ENCODE measurements at regions of chr1 and their contacts with region 1.

Region 1: GRCh38 chr1:245942856-245943255 is 564.2 kb downstream of the SMYD3 start:
- DNase-seq: peak in 2 of 5 donors; percentile 39 to 74
- H3K4me3 ChIP-seq: no peak overlapping the region
- H3K4me3 Mint-ChIP-seq: peak overlapping the region in 4 of 7 donors; percentile 2 to 43 (median 16)
- H3K27ac ChIP-seq: no peak overlapping the region
- H3K27ac Mint-ChIP-seq: peak overlapping the region in 4 of 8 donors; percentile 2 to 25 (median 13)
- H3K4me1 ChIP-seq: peaks cover 10% of the 10 kb centered on the region
- H3K4me1 Mint-ChIP-seq: peaks cover 17 to 28% (median 28%) of the 10 kb centered on the region in 3 donors
- H3K27me3 ChIP-seq: no peaks in the 10 kb centered on the region
- H3K27me3 Mint-ChIP-seq: no peaks in the 10 kb centered on the region

Region 2: GRCh38 chr1:245698860-245699259 is 244.0 kb before region 1 on chr1:
- CTCF ChIA-PET with region 1: no interaction called
- POLR2A ChIA-PET with region 1: no interaction called
- DNase-seq: no peak
- H3K4me3 ChIP-seq: no peak overlapping the region
- H3K4me3 Mint-ChIP-seq: no peak overlapping the region
- H3K27ac ChIP-seq: no peak overlapping the region
- H3K27ac Mint-ChIP-seq: no peak overlapping the region
- H3K4me1 ChIP-seq: no peaks in the 10 kb centered on the region
- H3K4me1 Mint-ChIP-seq: no peaks in the 10 kb centered on the region
- H3K27me3 ChIP-seq: no peaks in the 10 kb centered on the region
- H3K27me3 Mint-ChIP-seq: peaks cover 0 to 1% of the 10 kb centered on the region in 2 donors

Region 3: DNA sequence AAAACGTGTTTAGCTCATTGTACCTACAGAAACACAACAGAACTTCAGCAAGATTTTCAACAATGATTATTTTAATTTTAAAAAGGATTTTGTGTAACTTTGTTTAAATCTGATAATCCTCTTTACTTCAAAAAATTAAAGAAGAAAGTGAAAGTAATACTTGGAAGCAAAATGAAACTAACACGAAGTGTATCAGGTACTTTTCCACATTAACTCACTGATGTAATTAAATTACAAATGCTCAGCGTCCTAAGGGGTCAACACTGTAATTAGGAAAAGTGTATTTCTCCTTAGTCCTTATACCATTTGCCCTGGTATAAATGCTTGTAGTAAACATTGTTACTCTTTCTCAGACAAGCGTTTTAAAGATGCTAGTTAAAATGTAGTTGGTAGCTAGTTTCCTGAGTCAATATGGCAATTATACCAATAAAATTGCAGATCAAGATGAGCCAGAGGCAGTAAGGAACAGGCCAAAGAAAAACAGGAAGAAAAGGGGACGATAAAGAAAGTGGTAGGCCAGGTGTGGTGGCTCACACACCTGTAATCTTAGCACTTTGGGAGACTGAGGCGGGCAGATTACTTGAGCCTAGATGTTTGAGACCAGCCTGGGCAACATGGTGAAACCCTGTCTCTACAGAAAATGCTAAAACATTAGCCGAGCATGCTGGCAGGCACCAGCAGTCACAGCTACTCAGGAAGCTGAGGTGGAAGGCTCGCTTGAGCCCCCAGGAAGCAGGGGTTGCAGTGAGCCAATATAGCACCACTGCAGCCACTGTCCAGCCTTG is 11.2 kb after region 1 on chr1:
- CTCF ChIA-PET with region 1: interaction called, 3 read pairs
- POLR2A ChIA-PET with region 1: interaction called, 10 read pairs
- DNase-seq: peak in 2 of 5 donors; percentile 31 to 40
- H3K4me3 ChIP-seq: peak overlapping the region; percentile 54
- H3K4me3 Mint-ChIP-seq: peak overlapping the region; percentile 73 to 92 (median 77)
- H3K27ac ChIP-seq: peak overlapping the region; percentile 76
- H3K27ac Mint-ChIP-seq: peak overlapping the region in 4 of 8 donors; percentile 95 to 98 (median 97)
- H3K4me1 ChIP-seq: peaks cover 50% of the 10 kb centered on the region
- H3K4me1 Mint-ChIP-seq: peaks cover 20 to 29% (median 28%) of the 10 kb centered on the region in 3 donors
- H3K27me3 ChIP-seq: no peaks in the 10 kb centered on the region
- H3K27me3 Mint-ChIP-seq: no peaks in the 10 kb centered on the region

Region 4: GRCh38 chr1:246095443-246095842 is 152.6 kb after region 1 on chr1:
- CTCF ChIA-PET with region 1: no interaction called
- POLR2A ChIA-PET with region 1: no interaction called
- DNase-seq: no peak
- H3K4me3 ChIP-seq: no peak overlapping the region
- H3K4me3 Mint-ChIP-seq: no peak overlapping the region
- H3K27ac ChIP-seq: no peak overlapping the region
- H3K27ac Mint-ChIP-seq: no peak overlapping the region
- H3K4me1 ChIP-seq: no peaks in the 10 kb centered on the region
- H3K4me1 Mint-ChIP-seq: no peaks in the 10 kb centered on the region
- H3K27me3 ChIP-seq: no peaks in the 10 kb centered on the region
- H3K27me3 Mint-ChIP-seq: no peaks in the 10 kb centered on the region

Measured in CD8-positive, alpha-beta memory T cell (primary cell).